Vagina (tissue), 2 donors: ENCODE measurements at regions of chr1 and their contacts with region 1.

Region 1: GRCh38 chr1:229268505-229268904 is 2.4 kb upstream of the RAB4A start:
- DNase-seq: no peak
- H3K4me3 ChIP-seq: no peak overlapping the region
- H3K27ac ChIP-seq: no peak overlapping the region
- H3K4me1 ChIP-seq: peaks cover 28% of the 10 kb centered on the region
- H3K27me3 ChIP-seq: no peaks in the 10 kb centered on the region
- CTCF ChIP-seq: no peak
- POLR2A ChIP-seq: no peak

Region 2: DNA sequence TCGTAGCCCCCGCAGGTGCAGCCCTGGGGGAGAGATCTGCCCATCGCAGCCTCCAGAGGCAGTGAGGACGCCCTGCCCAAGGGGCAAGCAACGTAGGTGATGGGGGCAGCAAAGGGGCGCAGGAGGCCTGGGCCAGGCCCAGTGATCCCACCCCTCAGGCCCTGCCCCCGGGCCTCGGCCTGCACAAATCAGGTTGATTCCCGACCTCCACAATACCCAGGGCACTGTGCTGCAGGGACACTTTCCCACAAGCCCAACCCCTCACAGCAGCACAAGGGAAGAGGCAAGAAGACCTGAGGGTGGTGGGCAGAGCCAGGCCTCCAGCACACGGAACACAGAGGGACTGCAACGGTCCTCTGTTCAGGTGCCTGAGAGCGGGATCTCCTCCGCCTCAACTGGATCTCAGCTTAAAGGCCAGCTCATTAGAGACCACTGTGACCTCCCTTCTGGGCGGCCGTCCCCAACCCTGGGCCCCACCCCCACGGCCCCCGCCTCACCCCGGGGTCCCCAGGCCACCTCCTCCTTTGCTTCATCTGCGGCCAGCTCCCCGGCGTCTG is 1186.8 kb before region 1 on chr1:
- intact Hi-C with region 1: no loop called
- DNase-seq: no peak
- H3K4me3 ChIP-seq: peak overlapping the region; percentile 91 to 99
- H3K27ac ChIP-seq: peak overlapping the region; percentile 100
- H3K4me1 ChIP-seq: peaks cover 53% of the 10 kb centered on the region
- H3K27me3 ChIP-seq: no peaks in the 10 kb centered on the region
- CTCF ChIP-seq: no peak
- POLR2A ChIP-seq: no peak

Region 3: GRCh38 chr1:229342656-229343569 is 74.4 kb after region 1 on chr1 and contains the start of gene CCSAP:
- intact Hi-C with region 1: no loop called
- DNase-seq: no peak
- H3K4me3 ChIP-seq: peak within 1 kb of the TSS; percentile 95 to 96
- H3K27ac ChIP-seq: peak within 1 kb of the TSS; percentile 94
- H3K4me1 ChIP-seq: peaks cover 26% of the 10 kb centered on the region
- H3K27me3 ChIP-seq: no peaks in the 10 kb centered on the region
- CTCF ChIP-seq: no peak
- POLR2A ChIP-seq: peak in 1 of 2 donors; percentile 32
- total RNA-seq, gene CCSAP: 3.9 TPM

Region 4: DNA sequence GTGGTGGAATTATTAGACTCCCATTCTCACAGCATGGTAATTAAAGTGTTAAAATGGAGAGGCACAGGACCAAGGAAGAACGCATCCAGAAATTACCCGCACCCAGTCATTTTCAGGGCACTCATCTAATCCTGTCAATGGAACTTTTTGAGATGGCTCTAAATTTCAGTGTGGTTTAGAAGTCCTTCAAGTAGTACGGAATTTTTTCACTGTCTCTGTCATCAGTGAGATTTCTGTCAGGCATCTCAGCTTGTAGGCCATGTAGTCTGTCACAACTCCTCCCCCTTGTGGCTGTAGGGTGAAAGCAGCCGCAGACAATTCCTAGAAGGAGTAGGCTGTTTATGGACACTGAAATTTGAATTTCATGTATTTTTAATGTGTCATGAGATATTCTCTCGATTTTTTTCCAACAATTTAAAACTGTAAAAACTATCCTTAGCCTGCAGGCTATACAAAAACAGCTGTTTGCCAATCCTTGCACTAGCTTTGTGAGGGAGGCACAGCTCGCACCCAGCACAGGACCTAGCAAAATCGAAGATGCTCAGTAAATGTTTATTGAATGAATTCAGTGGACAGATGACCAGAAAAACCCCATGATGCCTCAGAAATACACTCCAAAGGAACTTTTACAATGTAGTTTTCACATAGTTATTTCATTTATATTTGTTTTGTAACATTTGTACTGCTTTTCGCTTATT is 246.2 kb after region 1 on chr1:
- intact Hi-C with region 1: loop called (anchors 10 kb)
- DNase-seq: no peak
- H3K4me3 ChIP-seq: no peak overlapping the region
- H3K27ac ChIP-seq: no peak overlapping the region
- H3K4me1 ChIP-seq: no peaks in the 10 kb centered on the region
- H3K27me3 ChIP-seq: no peaks in the 10 kb centered on the region
- CTCF ChIP-seq: peak; percentile 54 to 64 (median 62)
- POLR2A ChIP-seq: no peak

Region 5: DNA sequence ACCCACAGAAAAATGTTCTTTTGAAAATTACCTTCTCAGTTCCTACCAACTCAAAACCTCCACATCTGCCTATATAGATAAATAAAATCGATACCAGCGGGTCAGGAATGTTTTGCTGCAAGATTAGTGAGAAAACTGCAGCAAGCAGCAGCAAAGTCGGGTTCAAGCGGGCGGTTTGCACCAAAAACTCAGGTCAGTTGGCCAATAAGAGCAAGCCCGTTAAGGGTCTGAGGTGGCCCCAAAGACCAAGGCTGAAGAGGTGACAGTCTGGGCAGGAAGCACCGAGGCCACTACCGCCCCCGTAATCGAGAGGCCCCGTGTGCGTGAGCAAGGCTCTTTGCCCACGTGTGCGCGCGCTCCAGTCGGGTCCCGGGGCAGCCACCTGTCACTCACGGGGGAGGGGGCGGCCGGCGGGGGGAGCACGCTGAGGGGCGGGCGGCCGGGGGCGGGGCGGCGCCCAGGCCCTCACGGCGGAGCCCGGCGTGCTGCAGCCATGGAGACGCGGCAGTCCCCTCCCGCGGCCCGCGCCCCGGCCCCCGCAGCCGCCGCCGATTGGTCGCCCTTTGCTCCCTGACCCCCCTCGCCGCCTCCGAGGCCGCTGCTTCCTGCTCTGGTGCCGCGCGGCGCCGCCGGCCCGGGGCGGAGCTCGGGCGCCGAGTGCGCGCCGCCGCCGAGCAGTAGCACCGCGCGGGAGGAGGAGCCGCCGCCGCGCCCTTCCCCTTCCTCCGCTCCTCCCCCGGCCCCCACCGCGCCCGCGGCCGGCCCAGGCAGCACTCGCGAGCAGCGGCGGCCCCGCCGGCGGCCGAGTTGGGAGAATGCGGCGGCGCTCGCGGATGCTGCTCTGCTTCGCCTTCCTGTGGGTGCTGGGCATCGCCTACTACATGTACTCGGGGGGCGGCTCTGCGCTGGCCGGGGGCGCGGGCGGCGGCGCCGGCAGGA is 798.2 kb after region 1 on chr1 and contains the start of gene GALNT2:
- intact Hi-C with region 1: no loop called
- DNase-seq: peak; percentile 70 to 87
- H3K4me3 ChIP-seq: peak within 1 kb of the TSS; percentile 86 to 91
- H3K27ac ChIP-seq: peak within 1 kb of the TSS; percentile 92
- H3K4me1 ChIP-seq: peaks cover 43% of the 10 kb centered on the region
- H3K27me3 ChIP-seq: no peaks in the 10 kb centered on the region
- CTCF ChIP-seq: no peak
- POLR2A ChIP-seq: peak in 1 of 2 donors; percentile 88
- total RNA-seq, gene GALNT2: 51.6 TPM